ENCODE measurements at regions of chr1 and their contacts with region 1.

Region 1: DNA sequence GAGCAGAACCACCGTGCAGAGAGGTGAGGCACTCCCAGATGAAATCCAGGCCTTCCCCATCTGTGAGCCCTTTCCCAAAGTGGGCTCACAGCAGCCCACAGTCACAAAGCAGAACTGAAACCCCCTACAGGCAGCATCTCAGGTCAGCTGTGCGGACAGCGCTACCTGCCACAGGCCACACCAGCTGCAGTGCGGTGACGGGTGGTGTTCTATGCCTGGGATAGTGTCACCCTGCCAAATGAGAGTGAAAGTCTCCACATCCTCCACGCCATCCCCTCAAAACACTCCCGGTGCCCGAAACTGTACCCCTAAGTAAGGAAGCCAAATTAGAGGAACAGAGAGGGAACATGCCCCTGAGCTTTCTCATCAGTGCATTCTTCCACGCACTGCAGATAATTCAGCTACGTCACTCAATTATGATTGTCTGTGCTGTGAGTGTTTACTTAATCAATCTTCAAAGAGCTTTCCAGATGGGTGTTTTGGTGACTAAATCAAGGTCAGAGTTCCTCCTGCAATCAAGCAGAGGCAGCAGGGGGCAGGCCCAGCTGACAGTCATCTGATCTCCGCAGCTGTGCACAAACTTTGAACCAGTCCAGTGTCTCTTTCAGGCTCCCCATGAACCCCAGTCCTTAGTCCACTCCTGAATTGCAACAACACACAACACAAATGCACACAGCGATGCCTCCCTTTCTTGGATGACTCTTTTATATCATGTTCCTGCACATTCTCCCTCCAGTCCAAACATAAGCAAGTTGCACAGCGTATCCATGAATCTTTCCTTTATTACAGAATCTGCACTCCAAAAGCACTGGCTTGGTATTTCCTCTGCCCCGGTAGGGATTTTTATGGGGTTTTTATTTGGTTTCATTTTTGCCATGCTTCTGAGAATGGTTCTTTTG is 150.0 kb downstream of the TOMM20 start:
- DNase-seq: peak; percentile 54
- ATAC-seq: peak; percentile 9
- H3K4me3 Mint-ChIP-seq: peak overlapping the region; percentile 5
- H3K27ac Mint-ChIP-seq: peak overlapping the region; percentile 91
- H3K4me1 Mint-ChIP-seq: peaks cover 72% of the 10 kb centered on the region
- H3K27me3 Mint-ChIP-seq: no peaks in the 10 kb centered on the region

Region 2: DNA sequence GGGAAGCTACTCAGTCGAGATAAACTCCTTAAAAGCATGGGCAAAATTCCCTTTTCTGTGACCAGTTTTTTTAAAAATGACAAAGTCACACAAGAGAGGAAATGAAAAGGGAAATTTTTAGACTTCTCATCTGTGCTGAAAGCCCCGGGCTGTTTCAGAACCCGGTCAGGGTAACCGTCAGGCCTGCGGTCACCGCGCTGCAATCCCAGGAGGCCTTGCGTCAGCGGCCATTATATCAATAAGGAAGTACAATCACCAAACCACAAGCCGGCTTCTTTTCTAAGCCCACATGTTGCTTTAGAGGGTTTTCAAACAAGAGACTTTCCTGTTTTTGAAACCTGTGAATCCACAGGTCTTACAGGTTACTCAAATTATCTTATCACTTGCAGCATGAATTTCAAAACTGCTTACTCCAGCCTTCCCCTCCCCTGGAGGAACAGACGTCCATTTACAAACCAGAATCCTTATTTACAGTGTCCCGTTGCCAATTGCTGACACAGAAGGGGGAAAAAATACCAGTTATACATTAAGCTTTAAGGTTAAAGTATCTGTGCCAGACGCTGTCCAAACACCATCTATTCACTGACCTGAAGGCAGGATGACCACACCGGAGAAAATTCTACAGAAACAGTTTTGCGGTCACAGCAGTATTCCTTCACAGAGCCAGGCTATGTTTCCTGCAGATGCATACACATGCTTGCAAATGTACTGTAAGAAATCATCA is 15.3 kb before region 1 on chr1:
- CTCF ChIA-PET with region 1: interaction called, 28 read pairs
- POLR2A ChIA-PET with region 1: interaction called, 10 read pairs
- DNase-seq: peak; percentile 94
- ATAC-seq: peak; percentile 84
- H3K4me3 Mint-ChIP-seq: peak overlapping the region; percentile 66
- H3K27ac Mint-ChIP-seq: peak overlapping the region; percentile 93
- H3K4me1 Mint-ChIP-seq: peaks cover 71% of the 10 kb centered on the region
- H3K27me3 Mint-ChIP-seq: no peaks in the 10 kb centered on the region

Measured in activated CD8-positive, alpha-beta T cell treated with anti-CD3 and anti-CD28 coated beads, Interleukin-2, amount 10 ng/mL, durations not matched to agents 7 days and 5 days (primary cell).